HEK293T (cell line): ENCODE measurements at regions of chrX and their contacts with region 1.

Region 1: GRCh38 chrX:49043220-49043986 is at the start of gene TFE3:
- DNase-seq: peak; percentile 89

Region 2: GRCh38 chrX:49002091-49002935 is 41.1 kb before region 1 on chrX and contains the start of gene GRIPAP1:
- CTCF ChIA-PET with region 1: no interaction called
- POLR2A ChIA-PET with region 1: interaction called, 19 read pairs
- DNase-seq: peak; percentile 85

Region 3: GRCh38 chrX:49053223-49054072 is 10.0 kb after region 1 on chrX:
- CTCF ChIA-PET with region 1: interaction called, 4 read pairs
- POLR2A ChIA-PET with region 1: interaction called, 12 read pairs
- DNase-seq: peak; percentile 88